Activated CD8-positive, alpha-beta T cell treated with anti-CD3 and anti-CD28 coated beads for 36 hours (primary cell): ENCODE measurements at regions of chr17 and their contacts with region 1.

Region 1: DNA sequence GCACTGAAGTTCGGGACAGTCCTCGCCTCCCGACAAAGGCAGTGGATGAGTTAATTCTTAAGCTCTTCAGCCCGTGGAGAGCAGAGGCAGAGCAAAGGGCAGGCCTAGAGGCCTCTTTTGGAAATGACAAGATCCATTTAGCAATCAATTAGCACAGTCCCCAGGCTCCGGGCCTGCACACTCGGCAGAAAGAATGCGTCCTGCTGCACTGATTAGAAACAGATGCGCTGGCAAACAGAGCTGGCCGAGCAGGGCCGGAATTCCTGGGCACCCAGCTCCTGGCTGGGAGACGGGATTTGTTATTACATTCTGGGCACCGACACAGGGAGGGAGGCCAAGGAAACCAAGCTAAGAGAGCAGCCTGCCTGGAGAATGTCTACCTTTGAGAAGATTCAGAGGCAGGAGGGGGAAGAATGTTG is 162.9 kb downstream of the COPRS start:
- DNase-seq: no peak
- ATAC-seq: no peak
- H3K4me3 Mint-ChIP-seq: no peak overlapping the region
- H3K27ac Mint-ChIP-seq: no peak overlapping the region
- H3K4me1 Mint-ChIP-seq: no peaks in the 10 kb centered on the region
- H3K27me3 Mint-ChIP-seq: peaks cover 3% of the 10 kb centered on the region
- CTCF ChIP-seq: no peak

Region 2: GRCh38 chr17:31629696-31630470 is 66.3 kb before region 1 on chr17:
- CTCF ChIA-PET with region 1: no interaction called
- POLR2A ChIA-PET with region 1: no interaction called
- intact Hi-C with region 1: loop called (anchors 10 kb)
- DNase-seq: no peak
- ATAC-seq: no peak
- H3K4me3 Mint-ChIP-seq: no peak overlapping the region
- H3K27ac Mint-ChIP-seq: no peak overlapping the region
- H3K4me1 Mint-ChIP-seq: no peaks in the 10 kb centered on the region
- H3K27me3 Mint-ChIP-seq: peaks cover 12% of the 10 kb centered on the region
- CTCF ChIP-seq: no peak

Region 3: GRCh38 chr17:31663576-31663975 is 32.6 kb before region 1 on chr17:
- CTCF ChIA-PET with region 1: no interaction called
- POLR2A ChIA-PET with region 1: no interaction called
- intact Hi-C with region 1: no loop called
- DNase-seq: no peak
- ATAC-seq: no peak
- H3K4me3 Mint-ChIP-seq: no peak overlapping the region
- H3K27ac Mint-ChIP-seq: no peak overlapping the region
- H3K4me1 Mint-ChIP-seq: no peaks in the 10 kb centered on the region
- H3K27me3 Mint-ChIP-seq: peaks cover 19% of the 10 kb centered on the region
- CTCF ChIP-seq: no peak

Region 4: GRCh38 chr17:31778523-31778922 is 82.3 kb after region 1 on chr17:
- CTCF ChIA-PET with region 1: no interaction called
- POLR2A ChIA-PET with region 1: no interaction called
- intact Hi-C with region 1: loop called (anchors 10 kb)
- DNase-seq: no peak
- ATAC-seq: no peak
- H3K4me3 Mint-ChIP-seq: no peak overlapping the region
- H3K27ac Mint-ChIP-seq: no peak overlapping the region
- H3K4me1 Mint-ChIP-seq: no peaks in the 10 kb centered on the region
- H3K27me3 Mint-ChIP-seq: peaks cover 17% of the 10 kb centered on the region
- CTCF ChIP-seq: no peak